ENCODE measurements at regions of chr6 and their contacts with region 1.

Region 1: DNA sequence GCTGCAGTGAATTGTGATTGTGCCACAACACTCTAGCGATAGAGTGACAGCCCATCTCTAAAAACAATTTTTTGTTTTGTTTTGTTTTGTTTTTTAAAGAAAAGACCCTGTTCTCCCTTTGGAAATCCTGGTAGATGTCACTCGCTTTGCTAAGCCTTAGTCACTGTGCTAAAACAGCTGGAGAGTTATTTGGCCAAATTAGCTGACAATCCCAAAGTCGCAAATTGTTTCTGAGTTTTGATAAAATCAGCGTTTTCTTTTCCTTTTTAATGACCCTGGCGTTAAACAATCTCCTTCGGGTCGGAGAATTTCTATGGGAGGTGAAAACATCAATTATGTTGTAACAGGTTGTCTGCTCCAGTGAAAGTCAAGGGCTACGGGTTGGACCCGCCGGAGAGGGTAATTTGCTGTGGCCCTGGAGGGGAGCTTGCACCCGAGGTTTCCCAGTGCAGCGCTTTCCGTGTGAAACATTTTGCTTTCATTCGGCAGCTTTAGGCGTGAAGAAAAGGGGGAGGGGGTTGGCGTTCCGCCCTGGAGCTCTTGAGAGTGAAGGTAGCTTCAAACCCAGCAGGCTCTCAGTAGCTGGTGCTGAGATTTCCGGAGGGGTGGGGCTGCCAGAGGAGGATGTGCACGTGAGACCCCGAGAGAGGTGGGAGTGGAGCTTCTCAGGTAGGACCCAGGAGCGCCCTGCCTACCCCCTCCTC is 296.6 kb downstream of the PHACTR1 start:
- DNase-seq: peak; percentile 81
- ATAC-seq: peak; percentile 41

Region 2: GRCh38 chr6:12911387-12911960 is 101.7 kb before region 1 on chr6:
- intact Hi-C with region 1: loop called (anchors 10 kb)
- DNase-seq: no peak
- ATAC-seq: peak; percentile 52

Region 3: GRCh38 chr6:12935637-12936036 is 77.5 kb before region 1 on chr6:
- intact Hi-C with region 1: no loop called
- DNase-seq: no peak
- ATAC-seq: no peak

Region 4: DNA sequence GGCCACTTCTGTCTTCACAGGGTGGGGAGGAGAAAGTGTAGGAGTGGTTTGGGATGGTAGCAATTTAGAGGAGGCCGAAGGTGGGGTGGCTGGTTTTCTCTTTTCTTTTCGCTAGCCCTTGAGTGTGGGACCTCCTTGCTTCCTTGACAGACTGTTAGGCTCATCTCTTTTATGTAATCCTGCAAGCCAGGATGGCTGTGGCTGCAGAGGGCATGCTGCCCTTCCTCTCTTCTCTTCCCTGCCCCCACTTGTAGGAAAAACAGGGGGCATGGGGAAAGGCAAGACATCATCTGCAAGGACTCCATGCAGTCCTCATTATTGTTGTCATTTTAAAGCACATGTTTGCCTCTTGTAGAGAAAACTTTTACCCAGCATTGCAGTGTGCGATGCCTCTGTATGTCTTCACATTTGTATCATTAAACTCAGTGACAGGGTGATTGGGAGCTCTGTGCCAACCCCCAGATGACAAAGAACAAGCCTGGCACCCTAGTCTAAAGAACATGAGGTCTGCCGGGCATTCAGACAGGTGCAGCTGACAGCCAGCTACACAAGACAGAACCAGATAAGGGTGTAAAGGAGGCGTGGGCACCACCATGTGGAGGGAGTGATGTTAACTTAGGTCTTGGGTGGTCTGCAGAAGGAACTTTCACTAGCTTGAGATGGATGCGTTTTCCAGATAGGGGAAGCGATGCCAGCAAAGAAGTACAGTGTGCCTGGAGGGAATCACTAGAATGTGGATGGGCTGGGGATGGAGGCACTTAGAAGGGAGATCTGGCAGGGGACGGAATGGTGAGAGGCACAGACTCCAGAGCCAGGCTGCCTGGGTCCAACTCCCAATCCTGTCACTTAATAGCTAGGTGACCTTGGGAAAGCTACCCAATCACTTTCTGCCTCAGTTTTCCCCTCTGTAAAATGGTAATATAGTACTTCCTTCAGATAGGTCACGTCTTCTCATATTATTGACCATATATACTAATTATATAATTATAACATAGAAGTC is 107.7 kb after region 1 on chr6:
- intact Hi-C with region 1: loop called (anchors 10 kb)
- DNase-seq: peak; percentile 56
- ATAC-seq: peak; percentile 91